Activated naive CD4-positive, alpha-beta T cell treated with anti-CD3 and anti-CD28 coated beads for 36 hours (primary cell): ENCODE measurements at regions of chr10 and their contacts with region 1.

Region 1: GRCh38 chr10:67764012-67764822 is 68.2 kb upstream of the CTNNA3 start:
- DNase-seq: peak; percentile 97
- H3K4me3 Mint-ChIP-seq: peak overlapping the region; percentile 93
- H3K27ac Mint-ChIP-seq: peak overlapping the region; percentile 99
- H3K4me1 Mint-ChIP-seq: peaks cover 4% of the 10 kb centered on the region
- H3K27me3 Mint-ChIP-seq: peaks cover 5% of the 10 kb centered on the region

Region 2: DNA sequence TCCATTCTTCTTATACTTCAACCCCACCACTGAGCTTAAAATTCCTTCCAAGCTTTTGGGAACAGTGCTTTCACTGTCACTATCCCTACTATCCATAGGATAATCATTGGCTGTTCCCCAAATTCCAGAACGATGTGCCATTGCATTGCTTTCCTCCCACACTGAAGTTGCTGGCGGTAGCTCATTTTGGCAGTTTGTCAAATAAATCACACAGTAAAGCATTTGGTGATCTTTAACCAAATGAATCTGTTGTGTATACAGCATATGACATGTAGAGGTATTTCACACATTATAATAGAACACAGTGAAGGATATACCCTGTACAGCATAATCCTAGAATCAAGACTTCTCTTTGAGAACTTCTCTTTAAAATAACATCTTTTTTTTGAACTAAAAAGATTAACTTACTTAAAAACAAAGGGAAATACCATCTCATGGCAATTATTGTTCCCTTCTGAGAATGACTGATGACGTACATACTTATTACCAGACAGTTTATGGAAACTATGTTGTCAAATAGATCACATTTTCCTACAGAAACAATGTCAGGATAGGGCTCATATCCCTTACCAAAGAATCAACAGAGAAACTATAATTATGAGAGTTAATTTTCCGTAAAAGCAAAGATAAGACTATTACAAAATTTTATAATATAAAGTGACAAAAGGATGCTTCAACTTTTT is 161.8 kb before region 1 on chr10:
- CTCF ChIA-PET with region 1: no interaction called
- intact Hi-C with region 1: no loop called
- DNase-seq: no peak
- H3K4me3 Mint-ChIP-seq: no peak overlapping the region
- H3K27ac Mint-ChIP-seq: no peak overlapping the region
- H3K4me1 Mint-ChIP-seq: no peaks in the 10 kb centered on the region
- H3K27me3 Mint-ChIP-seq: peaks cover 2% of the 10 kb centered on the region

Region 3: GRCh38 chr10:67612577-67613537 is 151.4 kb before region 1 on chr10:
- CTCF ChIA-PET with region 1: no interaction called
- intact Hi-C with region 1: loop called (anchors 1 kb)
- DNase-seq: peak; percentile 75
- H3K4me3 Mint-ChIP-seq: no peak overlapping the region
- H3K27ac Mint-ChIP-seq: peak overlapping the region; percentile 25
- H3K4me1 Mint-ChIP-seq: peaks cover 24% of the 10 kb centered on the region
- H3K27me3 Mint-ChIP-seq: no peaks in the 10 kb centered on the region

Region 4: DNA sequence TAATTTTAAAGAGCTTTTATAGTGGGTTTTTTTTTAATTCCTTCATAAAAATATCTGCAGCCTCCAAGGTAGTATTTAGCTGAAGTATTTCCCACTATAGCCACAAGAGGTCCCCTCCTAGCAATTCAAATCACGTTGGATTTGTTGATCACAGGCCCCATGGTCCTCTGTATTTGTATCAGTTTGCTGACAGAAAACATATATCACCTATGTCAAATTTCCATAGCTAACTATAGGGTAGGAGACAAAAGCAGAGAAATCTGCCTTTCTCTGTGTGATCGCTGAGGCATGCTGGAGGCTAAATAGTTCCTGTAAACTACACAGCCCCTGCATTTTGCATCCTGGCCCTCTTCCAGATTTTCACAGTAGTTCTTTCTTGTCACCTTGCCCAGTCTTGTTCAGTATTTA is 66.5 kb before region 1 on chr10:
- CTCF ChIA-PET with region 1: interaction called, 13 read pairs
- intact Hi-C with region 1: loop called (anchors 5 kb)
- DNase-seq: peak; percentile 10
- H3K4me3 Mint-ChIP-seq: no peak overlapping the region
- H3K27ac Mint-ChIP-seq: no peak overlapping the region
- H3K4me1 Mint-ChIP-seq: no peaks in the 10 kb centered on the region
- H3K27me3 Mint-ChIP-seq: peaks cover 10% of the 10 kb centered on the region

Region 5: DNA sequence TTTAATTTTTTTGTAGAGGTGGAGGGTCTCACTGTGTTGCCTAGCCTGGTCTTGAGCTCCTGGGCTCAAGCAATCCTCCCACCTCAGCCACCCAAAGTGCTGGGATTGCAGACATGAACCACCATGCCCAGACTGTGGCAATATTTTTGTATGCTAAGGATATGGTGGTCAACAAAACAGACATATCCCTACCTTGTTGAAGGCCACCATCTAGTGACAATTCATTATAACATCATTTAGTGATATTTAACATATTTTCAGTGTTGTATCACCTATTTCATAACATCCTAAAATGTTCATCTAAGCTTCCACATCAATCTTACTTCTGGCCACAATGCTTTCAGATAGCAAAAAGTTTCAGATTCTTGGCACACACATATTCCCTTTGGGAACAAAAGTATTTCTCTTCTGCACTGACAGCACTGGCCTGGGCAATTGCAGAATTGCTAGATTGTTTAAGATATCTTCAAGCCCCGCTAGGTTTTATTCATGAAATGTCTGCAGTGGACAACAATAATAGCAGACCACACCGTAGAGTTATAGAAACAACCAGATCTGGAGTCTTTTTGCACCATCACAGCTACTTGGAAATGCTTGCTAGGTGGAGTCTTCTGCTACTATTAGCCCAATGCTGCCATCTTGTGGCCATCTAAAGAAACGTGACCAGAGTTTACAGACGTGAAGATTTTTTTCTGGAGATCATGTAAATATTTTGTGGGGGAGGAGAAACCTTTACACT is 15.4 kb after region 1 on chr10:
- CTCF ChIA-PET with region 1: interaction called, 48 read pairs
- intact Hi-C with region 1: loop called (anchors 2 kb)
- DNase-seq: peak; percentile 85
- H3K4me3 Mint-ChIP-seq: no peak overlapping the region
- H3K27ac Mint-ChIP-seq: no peak overlapping the region
- H3K4me1 Mint-ChIP-seq: peaks cover 21% of the 10 kb centered on the region
- H3K27me3 Mint-ChIP-seq: no peaks in the 10 kb centered on the region

Region 6: GRCh38 chr10:67884313-67884841 is 120.2 kb after region 1 on chr10 and contains the start of gene SIRT1:
- CTCF ChIA-PET with region 1: no interaction called
- intact Hi-C with region 1: loop called (anchors 1 kb)
- DNase-seq: peak; percentile 88
- H3K4me3 Mint-ChIP-seq: peak within 1 kb of the TSS; percentile 90
- H3K27ac Mint-ChIP-seq: peak within 1 kb of the TSS; percentile 89
- H3K4me1 Mint-ChIP-seq: peaks cover 25% of the 10 kb centered on the region
- H3K27me3 Mint-ChIP-seq: no peaks in the 10 kb centered on the region
- total RNA-seq, gene SIRT1: 18.7 to 18.8 TPM

Region 7: DNA sequence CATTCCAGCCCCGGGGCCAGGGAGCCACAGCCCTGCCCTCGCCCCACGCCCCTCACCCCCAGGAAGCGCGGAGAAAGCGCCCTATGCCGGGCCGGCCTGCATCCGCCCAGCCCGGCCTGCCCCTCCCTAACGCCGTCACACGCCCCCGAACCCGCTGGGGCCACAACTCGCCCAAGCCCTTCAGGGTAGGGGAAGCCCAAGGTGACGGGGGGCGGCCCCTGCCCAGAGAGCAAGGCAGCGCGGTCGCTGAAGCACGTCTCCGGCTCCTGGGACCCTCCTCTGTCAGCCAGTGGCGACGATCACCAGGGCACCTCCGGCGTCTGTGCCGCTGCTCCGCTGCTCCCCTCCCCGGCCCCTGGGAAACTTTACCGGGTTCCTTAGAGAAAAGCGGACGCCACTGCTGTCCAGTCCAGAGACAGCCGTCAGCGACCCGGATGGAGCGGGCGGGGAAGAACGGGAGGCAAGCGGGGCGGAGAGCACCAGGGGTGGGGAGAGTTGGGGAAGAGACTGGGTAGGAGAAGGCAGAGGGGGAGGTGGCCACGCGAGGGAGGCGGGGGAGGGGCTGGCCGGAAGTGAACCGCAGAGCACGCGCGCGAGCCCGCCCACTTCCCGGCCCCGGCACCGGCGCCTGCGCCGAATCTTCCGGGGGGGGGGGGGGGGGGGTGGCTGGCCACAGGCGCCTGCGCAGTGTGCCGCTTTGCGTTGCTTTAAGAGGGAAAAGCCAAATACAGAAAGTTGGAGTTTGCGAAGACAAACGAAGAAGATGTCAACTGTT is 310.7 kb after region 1 on chr10 and contains the start of gene HERC4:
- CTCF ChIA-PET with region 1: no interaction called
- intact Hi-C with region 1: loop called (anchors 1 kb)
- DNase-seq: peak; percentile 92
- H3K4me3 Mint-ChIP-seq: peak within 1 kb of the TSS; percentile 97
- H3K27ac Mint-ChIP-seq: peak within 1 kb of the TSS; percentile 91
- H3K4me1 Mint-ChIP-seq: peaks cover 33% of the 10 kb centered on the region
- H3K27me3 Mint-ChIP-seq: no peaks in the 10 kb centered on the region
- total RNA-seq, gene HERC4: 42.2 to 45.0 TPM

Region 8: GRCh38 chr10:68600041-68600778 is 836.0 kb after region 1 on chr10:
- CTCF ChIA-PET with region 1: no interaction called
- intact Hi-C with region 1: loop called (anchors 10 kb)
- DNase-seq: peak; percentile 64
- H3K4me3 Mint-ChIP-seq: peak overlapping the region; percentile 83
- H3K27ac Mint-ChIP-seq: peak overlapping the region; percentile 84
- H3K4me1 Mint-ChIP-seq: peaks cover 28% of the 10 kb centered on the region
- H3K27me3 Mint-ChIP-seq: no peaks in the 10 kb centered on the region